CD4-positive, alpha-beta T cell (primary cell): ENCODE measurements at regions of chr11 and their contacts with region 1.

Region 1: DNA sequence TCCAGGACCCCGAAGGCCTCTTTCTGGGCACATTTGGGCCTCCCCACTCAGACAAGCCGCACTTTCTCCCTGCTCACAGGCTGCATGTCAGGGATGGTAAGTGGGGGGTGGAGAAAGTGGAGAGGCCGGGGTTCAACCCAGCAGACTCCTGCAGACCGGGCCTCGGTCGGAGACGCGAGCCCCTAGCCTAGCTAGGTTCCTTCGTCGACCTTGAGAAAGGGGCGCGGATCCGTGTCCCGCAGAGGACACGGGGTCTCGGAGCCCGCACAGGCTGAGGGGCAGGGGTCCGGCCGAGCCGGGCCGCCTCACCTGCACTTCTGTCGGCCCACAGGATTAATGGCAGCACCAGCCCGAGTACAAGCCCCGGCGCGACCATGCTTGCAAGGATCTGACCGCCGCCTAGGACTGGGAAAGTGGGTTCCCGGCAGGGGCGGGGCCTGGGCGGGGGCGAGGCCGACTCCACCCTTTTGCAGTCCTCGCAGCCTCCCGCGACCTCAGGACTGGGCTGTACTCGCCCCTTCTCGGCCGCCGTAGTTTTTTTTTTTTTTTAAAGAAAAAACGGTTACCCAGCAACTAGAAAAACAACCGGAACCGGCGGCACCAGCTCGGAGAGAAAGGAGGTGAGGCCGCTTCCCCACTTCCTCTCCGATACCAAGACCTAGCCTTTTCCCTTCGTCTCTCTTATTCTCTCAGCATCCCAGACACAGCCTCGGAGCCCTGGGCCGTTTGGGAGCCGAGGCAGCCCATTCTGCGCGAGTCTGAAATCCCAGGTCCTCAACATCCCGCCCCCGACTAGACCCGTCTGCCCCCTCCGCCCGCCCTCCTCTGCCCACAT is at the starts of genes SIAE and SPA17:
- DNase-seq: peak; percentile 70 to 95 (median 80)
- ATAC-seq: peak; percentile 66
- H3K4me3 ChIP-seq: peak within 1 kb of the TSS; percentile 85
- H3K4me3 Mint-ChIP-seq: peak within 1 kb of the TSS; percentile 91
- H3K27ac ChIP-seq: peak within 1 kb of the TSS; percentile 71 to 80
- H3K27ac Mint-ChIP-seq: no peak within 1 kb of the TSS
- H3K4me1 ChIP-seq: peaks cover 32% of the 10 kb centered on the region
- H3K4me1 Mint-ChIP-seq: peaks cover 42% of the 10 kb centered on the region
- H3K27me3 ChIP-seq: no peaks in the 10 kb centered on the region
- H3K27me3 Mint-ChIP-seq: no peaks in the 10 kb centered on the region
- CTCF ChIP-seq: no peak
- total RNA-seq, gene SIAE: 4.5 to 5.6 TPM
- total RNA-seq, gene SPA17: 0.16 TPM in 1 of 2 experiments, not detected in the other

Region 2: GRCh38 chr11:124622531-124623451 is 50.8 kb before region 1 on chr11 and contains the start of gene TBRG1:
- CTCF ChIA-PET with region 1: interaction called, 5 read pairs
- POLR2A ChIA-PET with region 1: interaction called, 5 read pairs
- intact Hi-C with region 1: loop called in 1 of 2 experiments (anchors 1 kb)
- DNase-seq: peak; percentile 63 to 94 (median 77)
- ATAC-seq: peak; percentile 95
- H3K4me3 ChIP-seq: peak within 1 kb of the TSS; percentile 83
- H3K4me3 Mint-ChIP-seq: peak within 1 kb of the TSS; percentile 97
- H3K27ac ChIP-seq: peak within 1 kb of the TSS; percentile 88 to 90
- H3K27ac Mint-ChIP-seq: peak within 1 kb of the TSS; percentile 96
- H3K4me1 ChIP-seq: peaks cover 17% of the 10 kb centered on the region
- H3K4me1 Mint-ChIP-seq: peaks cover 49% of the 10 kb centered on the region
- H3K27me3 ChIP-seq: no peaks in the 10 kb centered on the region
- H3K27me3 Mint-ChIP-seq: peaks cover 15% of the 10 kb centered on the region
- CTCF ChIP-seq: no peak
- total RNA-seq, gene TBRG1: 62.4 to 65.9 TPM

Region 3: DNA sequence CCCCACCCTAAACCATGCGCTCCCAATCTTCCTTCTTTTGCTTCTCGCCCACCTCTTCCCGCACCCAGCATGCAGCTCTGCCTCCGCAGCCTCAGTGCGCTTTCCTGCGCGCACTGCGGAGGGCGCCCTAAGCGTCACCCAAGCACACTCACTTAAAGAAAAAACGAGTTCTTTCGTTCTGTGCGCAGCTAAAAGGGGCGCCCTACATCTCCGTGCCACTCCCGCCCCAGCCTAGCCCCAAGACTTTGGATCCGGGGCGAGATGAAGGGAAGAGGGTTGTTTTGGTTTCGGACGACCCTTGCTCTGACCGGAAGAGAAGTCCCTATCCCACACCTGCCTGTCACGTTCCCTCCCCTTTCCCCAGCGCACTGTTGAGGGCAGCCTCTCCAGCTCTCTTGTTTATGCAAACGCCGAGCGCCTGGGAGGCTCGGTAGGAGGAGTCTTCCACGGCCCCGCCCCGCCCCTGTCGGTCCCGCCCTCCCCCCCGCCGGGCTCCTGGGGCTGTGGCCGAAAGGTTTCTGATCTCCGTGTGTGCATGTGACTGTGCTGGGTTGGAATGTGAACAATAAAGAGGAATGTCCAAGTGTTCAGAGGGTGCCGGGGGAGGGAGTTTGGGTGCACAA is 73.2 kb after region 1 on chr11:
- CTCF ChIA-PET with region 1: interaction called, 48 read pairs
- POLR2A ChIA-PET with region 1: interaction called, 89 read pairs
- intact Hi-C with region 1: no loop called
- DNase-seq: peak; percentile 71 to 90 (median 76)
- ATAC-seq: peak; percentile 90
- H3K4me3 ChIP-seq: peak overlapping the region; percentile 95
- H3K4me3 Mint-ChIP-seq: peak overlapping the region; percentile 94
- H3K27ac ChIP-seq: peak overlapping the region; percentile 72 to 75
- H3K27ac Mint-ChIP-seq: peak overlapping the region; percentile 82
- H3K4me1 ChIP-seq: peaks cover 32% of the 10 kb centered on the region
- H3K4me1 Mint-ChIP-seq: peaks cover 5% of the 10 kb centered on the region
- H3K27me3 ChIP-seq: peaks cover 0 to 1% of the 10 kb centered on the region in 2 experiments
- H3K27me3 Mint-ChIP-seq: no peaks in the 10 kb centered on the region
- CTCF ChIP-seq: peak; percentile 67

Region 4: GRCh38 chr11:124793466-124794278 is 120.1 kb after region 1 on chr11:
- CTCF ChIA-PET with region 1: interaction called, 13 read pairs
- POLR2A ChIA-PET with region 1: interaction called, 23 read pairs
- intact Hi-C with region 1: loop called (anchors 1 to 10 kb)
- DNase-seq: peak in 4 of 14 experiments; percentile 35 to 71 (median 62)
- ATAC-seq: no peak
- H3K4me3 ChIP-seq: no peak overlapping the region
- H3K4me3 Mint-ChIP-seq: no peak overlapping the region
- H3K27ac ChIP-seq: no peak overlapping the region
- H3K27ac Mint-ChIP-seq: no peak overlapping the region
- H3K4me1 ChIP-seq: peaks cover 3% of the 10 kb centered on the region
- H3K4me1 Mint-ChIP-seq: peaks cover 46% of the 10 kb centered on the region
- H3K27me3 ChIP-seq: no peaks in the 10 kb centered on the region
- H3K27me3 Mint-ChIP-seq: no peaks in the 10 kb centered on the region
- CTCF ChIP-seq: peak; percentile 84

Region 5: GRCh38 chr11:124875943-124876817 is 202.6 kb after region 1 on chr11:
- CTCF ChIA-PET with region 1: interaction called, 6 read pairs
- POLR2A ChIA-PET with region 1: interaction called, 3 read pairs
- intact Hi-C with region 1: loop called (anchors 5 kb)
- DNase-seq: peak; percentile 54 to 89 (median 71)
- ATAC-seq: peak; percentile 96
- H3K4me3 ChIP-seq: peak overlapping the region; percentile 83
- H3K4me3 Mint-ChIP-seq: peak overlapping the region; percentile 94
- H3K27ac ChIP-seq: peak overlapping the region; percentile 62 to 76
- H3K27ac Mint-ChIP-seq: peak overlapping the region; percentile 87
- H3K4me1 ChIP-seq: peaks cover 23% of the 10 kb centered on the region
- H3K4me1 Mint-ChIP-seq: peaks cover 25% of the 10 kb centered on the region
- H3K27me3 ChIP-seq: peaks cover 10 to 40% of the 10 kb centered on the region in 2 experiments
- H3K27me3 Mint-ChIP-seq: peaks cover 42% of the 10 kb centered on the region
- CTCF ChIP-seq: peak; percentile 80

Region 6: GRCh38 chr11:125887373-125888324 is 1214.1 kb after region 1 on chr11 and contains the start of gene HYLS1:
- CTCF ChIA-PET with region 1: no interaction called
- POLR2A ChIA-PET with region 1: no interaction called
- intact Hi-C with region 1: loop called in 1 of 2 experiments (anchors 10 kb)
- DNase-seq: peak; percentile 87 to 98 (median 91)
- ATAC-seq: peak; percentile 88
- H3K4me3 ChIP-seq: peak within 1 kb of the TSS; percentile 63
- H3K4me3 Mint-ChIP-seq: peak within 1 kb of the TSS; percentile 95
- H3K27ac ChIP-seq: peak within 1 kb of the TSS; percentile 71 to 78
- H3K27ac Mint-ChIP-seq: peak within 1 kb of the TSS; percentile 92
- H3K4me1 ChIP-seq: peaks cover 20% of the 10 kb centered on the region
- H3K4me1 Mint-ChIP-seq: peaks cover 50% of the 10 kb centered on the region
- H3K27me3 ChIP-seq: no peaks in the 10 kb centered on the region
- H3K27me3 Mint-ChIP-seq: no peaks in the 10 kb centered on the region
- CTCF ChIP-seq: no peak
- total RNA-seq, gene HYLS1: 1.2 to 1.3 TPM